ENCODE measurements at regions of chr15 and their contacts with region 1.

Region 1: DNA sequence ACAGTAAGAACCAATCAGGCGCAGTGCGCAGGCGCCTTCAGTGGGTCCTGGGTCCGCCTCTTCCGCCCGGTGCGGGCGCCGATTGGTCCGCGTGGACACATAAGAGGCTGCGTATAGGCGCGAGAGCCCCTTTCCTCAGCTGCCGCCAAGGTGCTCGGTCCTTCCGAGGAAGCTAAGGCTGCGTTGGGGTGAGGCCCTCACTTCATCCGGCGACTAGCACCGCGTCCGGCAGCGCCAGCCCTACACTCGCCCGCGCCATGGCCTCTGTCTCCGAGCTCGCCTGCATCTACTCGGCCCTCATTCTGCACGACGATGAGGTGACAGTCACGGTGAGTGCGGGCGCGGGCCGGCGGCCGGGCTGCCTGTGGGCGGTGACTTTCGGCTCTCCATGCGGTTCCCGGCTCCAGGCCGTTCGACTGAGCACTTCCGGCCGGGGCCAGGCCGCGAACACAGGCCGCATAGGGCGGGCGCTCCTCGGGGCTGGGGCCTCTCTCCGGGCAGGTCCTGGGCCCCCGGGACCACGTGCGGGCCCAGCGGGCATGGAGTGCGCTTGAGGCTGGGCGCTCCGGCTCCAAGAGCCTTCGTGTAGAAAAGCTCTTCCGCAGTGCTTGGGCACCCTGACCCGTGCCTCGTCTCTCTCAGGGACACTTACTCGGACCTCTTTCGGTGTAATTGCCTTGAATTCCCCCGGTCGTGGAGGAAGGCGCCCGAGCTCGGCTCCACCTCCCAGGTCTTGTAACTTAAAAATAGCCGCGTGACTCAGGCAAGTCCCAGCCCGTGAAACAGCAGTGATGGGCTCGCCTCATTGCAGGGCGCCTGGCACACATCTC is at the start of gene RPLP1:
- DNase-seq: peak; percentile 95 to 97
- ATAC-seq: peak; percentile 80 to 84
- H3K4me3 ChIP-seq: peak within 1 kb of the TSS; percentile 73 to 97 (median 88)
- H3K27ac ChIP-seq: peak within 1 kb of the TSS; percentile 96 to 99 (median 97)
- H3K4me1 ChIP-seq: peaks cover 41 to 43% of the 10 kb centered on the region in 2 donors
- H3K27me3 ChIP-seq: no peaks in the 10 kb centered on the region
- CTCF ChIP-seq: peak in 1 of 5 experiments; percentile 12
- POLR2A ChIP-seq: peak; percentile 97 to 99
- total RNA-seq, gene RPLP1: 849 to 1,174 (median 925) TPM

Region 2: DNA sequence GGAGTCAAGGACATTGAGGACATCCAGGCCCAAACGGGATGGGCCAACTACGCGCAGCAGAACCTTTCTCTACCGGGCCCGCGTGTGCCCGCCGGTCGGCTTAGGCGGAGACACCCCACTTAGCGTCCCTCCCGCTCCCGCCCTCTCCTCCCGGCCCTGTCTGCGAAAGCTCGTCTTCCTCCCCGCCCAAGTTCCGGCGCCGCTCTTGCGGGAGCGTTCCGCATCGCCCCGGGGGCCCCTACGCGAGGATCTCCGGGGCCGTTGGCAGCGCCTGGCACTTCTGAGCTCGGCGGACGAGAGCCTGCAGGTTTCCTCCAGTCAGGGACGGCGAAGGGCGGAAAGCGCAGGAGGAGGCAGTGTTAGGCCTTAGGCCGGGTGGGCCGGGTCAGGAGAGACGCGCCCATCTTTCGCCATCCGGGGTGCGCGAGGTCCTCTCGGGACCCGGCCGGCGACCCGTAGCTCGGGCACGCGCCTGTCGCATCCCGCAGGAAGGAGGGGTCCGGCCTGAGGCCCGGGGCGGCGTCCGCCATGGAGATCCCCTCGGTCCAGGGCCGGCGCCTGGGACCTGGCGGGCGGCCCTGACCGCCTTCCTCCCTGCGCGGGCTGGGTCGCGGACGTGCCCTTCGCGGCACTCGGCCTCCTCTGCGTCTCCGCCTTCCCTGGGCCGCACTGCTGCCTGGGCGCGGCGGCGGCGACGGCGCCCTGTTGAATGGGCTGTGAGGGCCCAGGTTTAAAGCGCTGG is 1175.1 kb before region 1 on chr15 and contains the start of gene FEM1B:
- in situ Hi-C with region 1: no loop called
- intact Hi-C with region 1: loop called (anchors 10 kb)
- DNase-seq: peak; percentile 90 to 92
- ATAC-seq: peak; percentile 60 to 68
- H3K4me3 ChIP-seq: peak within 1 kb of the TSS; percentile 73 to 97 (median 81)
- H3K27ac ChIP-seq: peak within 1 kb of the TSS; percentile 97 to 100 (median 99)
- H3K4me1 ChIP-seq: peaks cover 58 to 76% of the 10 kb centered on the region in 2 donors
- H3K27me3 ChIP-seq: no peaks in the 10 kb centered on the region
- CTCF ChIP-seq: peak in 2 of 5 experiments; percentile 40 to 42
- POLR2A ChIP-seq: peak; percentile 94 to 96
- total RNA-seq, gene FEM1B: 80.8 to 158 (median 124) TPM

Region 3: GRCh38 chr15:68817304-68818065 is 635.4 kb before region 1 on chr15:
- in situ Hi-C with region 1: no loop called
- intact Hi-C with region 1: loop called (anchors 5 kb)
- DNase-seq: peak; percentile 43 to 67
- ATAC-seq: peak; percentile 30 to 47
- H3K4me3 ChIP-seq: peak overlapping the region; percentile 69 to 97 (median 87)
- H3K27ac ChIP-seq: peak overlapping the region; percentile 93 to 99 (median 99)
- H3K4me1 ChIP-seq: peaks cover 47% of the 10 kb centered on the region in 2 donors
- H3K27me3 ChIP-seq: no peaks in the 10 kb centered on the region
- CTCF ChIP-seq: no peak
- POLR2A ChIP-seq: peak; percentile 39 to 51

Region 4: GRCh38 chr15:69794645-69795461 is 341.9 kb after region 1 on chr15:
- in situ Hi-C with region 1: no loop called
- intact Hi-C with region 1: loop called (anchors 5 kb)
- DNase-seq: peak; percentile 33 to 42
- ATAC-seq: no peak
- H3K4me3 ChIP-seq: no peak overlapping the region
- H3K27ac ChIP-seq: peak overlapping the region; percentile 46 to 68 (median 60)
- H3K4me1 ChIP-seq: peaks cover 29 to 39% of the 10 kb centered on the region in 2 donors
- H3K27me3 ChIP-seq: no peaks in the 10 kb centered on the region
- CTCF ChIP-seq: no peak
- POLR2A ChIP-seq: no peak

Region 5: DNA sequence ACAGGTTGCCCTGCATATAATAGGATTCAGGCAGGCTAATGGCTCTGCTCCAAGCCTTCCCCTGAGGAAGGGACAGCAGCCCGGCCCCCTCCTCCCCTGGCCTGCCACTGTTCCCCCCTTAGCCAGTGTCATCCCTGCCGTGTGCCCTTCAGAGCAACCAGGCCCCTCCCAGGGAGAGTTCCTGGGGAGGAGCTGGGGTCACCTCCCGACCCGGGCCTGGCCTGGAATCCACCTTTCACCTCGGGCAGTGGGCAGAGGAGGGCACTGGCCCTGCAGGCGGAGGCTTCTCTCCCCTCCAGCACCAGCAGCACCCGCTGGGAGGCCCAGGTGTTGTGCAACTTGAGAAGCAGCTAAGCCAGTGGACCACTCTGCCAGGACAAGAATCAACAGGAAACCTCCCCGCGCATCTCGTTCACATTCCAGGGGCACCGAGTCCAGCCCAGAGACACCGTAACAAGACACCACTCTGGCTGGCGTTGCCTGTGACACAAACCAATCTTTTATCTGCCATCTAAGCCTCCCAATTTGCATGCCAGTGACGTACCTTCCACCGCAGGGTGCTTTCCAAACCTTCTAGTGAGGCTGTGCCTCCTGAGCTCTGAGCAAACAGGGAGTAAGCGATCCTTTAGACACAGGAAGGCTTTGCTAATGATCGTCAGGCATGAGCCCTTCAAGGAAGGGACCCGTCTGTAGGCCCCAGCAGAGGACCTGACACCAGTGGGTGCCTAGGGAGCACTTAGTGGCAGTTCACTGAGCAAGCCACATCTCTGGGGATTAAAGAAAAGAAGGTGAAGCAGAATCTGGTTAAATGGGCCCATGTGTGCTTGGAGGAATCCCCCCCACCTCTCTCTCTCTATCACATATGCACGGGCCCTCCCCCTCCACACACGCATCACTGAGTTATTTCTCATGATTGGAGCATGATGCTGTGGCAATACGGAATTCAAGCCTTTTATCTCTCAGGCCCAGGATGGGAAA is 743.7 kb after region 1 on chr15:
- in situ Hi-C with region 1: no loop called
- intact Hi-C with region 1: loop called (anchors 5 kb)
- DNase-seq: peak; percentile 95 to 98
- ATAC-seq: peak; percentile 85 to 86
- H3K4me3 ChIP-seq: peak overlapping the region in 1 of 4 donors; percentile 4
- H3K27ac ChIP-seq: peak overlapping the region; percentile 91 to 96 (median 94)
- H3K4me1 ChIP-seq: peaks cover 38 to 39% of the 10 kb centered on the region in 2 donors
- H3K27me3 ChIP-seq: no peaks in the 10 kb centered on the region
- CTCF ChIP-seq: peak in 2 of 5 experiments; percentile 20 to 31
- POLR2A ChIP-seq: peak; percentile 39 to 44